CD4-positive, alpha-beta memory T cell (primary cell): ENCODE measurements at regions of chr6 and their contacts with region 1.

Region 1: DNA sequence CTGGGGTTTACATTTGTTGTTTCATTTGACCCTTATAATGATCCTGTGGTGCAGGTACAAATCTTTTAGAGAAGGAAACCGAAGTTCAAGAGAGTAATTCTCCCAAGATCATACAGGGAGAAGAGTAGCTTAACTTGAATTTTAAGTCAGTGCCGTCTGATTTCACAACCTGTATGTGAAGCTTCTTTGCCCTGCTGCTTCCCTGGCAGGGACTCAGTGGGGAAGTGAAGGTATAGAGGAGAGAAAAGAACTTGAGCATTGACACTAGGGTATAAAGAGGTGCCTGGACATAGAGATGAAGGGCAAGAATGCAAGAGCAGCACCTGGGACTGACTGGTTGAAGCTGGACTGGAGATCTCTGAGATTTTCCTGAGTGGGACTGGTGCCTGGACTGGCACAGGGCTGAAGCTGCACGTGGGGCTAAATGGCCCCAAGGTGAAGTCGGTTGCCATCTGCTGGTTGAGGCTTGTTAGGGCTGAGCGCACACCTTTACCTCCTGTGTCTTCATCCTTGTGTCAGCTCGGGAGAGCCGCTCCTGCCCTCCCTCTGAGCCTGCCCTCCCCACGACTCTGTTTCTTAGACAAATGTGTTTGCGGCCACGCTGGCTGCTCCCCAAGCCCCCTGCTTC is 41.8 kb downstream of the FARS2 start:
- DNase-seq: peak; percentile 56 to 66 (median 62)
- H3K4me3 ChIP-seq: no peak overlapping the region
- H3K4me3 Mint-ChIP-seq: peak overlapping the region in 7 of 8 donors; percentile 43 to 78 (median 71)
- H3K27ac ChIP-seq: no peak overlapping the region
- H3K27ac Mint-ChIP-seq: peak overlapping the region in 6 of 7 donors; percentile 1 to 67 (median 63)
- H3K4me1 ChIP-seq: peaks cover 26% of the 10 kb centered on the region
- H3K4me1 Mint-ChIP-seq: peaks cover 25 to 46% (median 38%) of the 10 kb centered on the region in 4 donors
- H3K27me3 ChIP-seq: no peaks in the 10 kb centered on the region
- H3K27me3 Mint-ChIP-seq: no peaks in the 10 kb centered on the region

Region 2: GRCh38 chr6:5135788-5136376 is 167.2 kb before region 1 on chr6:
- CTCF ChIA-PET with region 1: interaction called, 259 read pairs
- POLR2A ChIA-PET with region 1: no interaction called
- intact Hi-C with region 1: loop called (anchors 2 kb)
- DNase-seq: peak in 4 of 5 donors; percentile 12 to 35 (median 29)
- H3K4me3 ChIP-seq: no peak overlapping the region
- H3K4me3 Mint-ChIP-seq: no peak overlapping the region
- H3K27ac ChIP-seq: no peak overlapping the region
- H3K27ac Mint-ChIP-seq: peak overlapping the region in 1 of 7 donors; percentile 6
- H3K4me1 ChIP-seq: no peaks in the 10 kb centered on the region
- H3K4me1 Mint-ChIP-seq: peaks cover 0 to 7% (median 3%) of the 10 kb centered on the region in 4 donors
- H3K27me3 ChIP-seq: no peaks in the 10 kb centered on the region
- H3K27me3 Mint-ChIP-seq: no peaks in the 10 kb centered on the region

Region 3: GRCh38 chr6:5174244-5174643 is 128.9 kb before region 1 on chr6:
- CTCF ChIA-PET with region 1: interaction called, 14 read pairs
- POLR2A ChIA-PET with region 1: no interaction called
- intact Hi-C with region 1: no loop called
- DNase-seq: peak; percentile 62 to 74 (median 72)
- H3K4me3 ChIP-seq: peak overlapping the region in 1 of 2 donors; percentile 4
- H3K4me3 Mint-ChIP-seq: peak overlapping the region; percentile 61 to 78 (median 70)
- H3K27ac ChIP-seq: peak overlapping the region; percentile 50
- H3K27ac Mint-ChIP-seq: peak overlapping the region; percentile 60 to 90 (median 82)
- H3K4me1 ChIP-seq: peaks cover 33% of the 10 kb centered on the region
- H3K4me1 Mint-ChIP-seq: peaks cover 30 to 43% (median 37%) of the 10 kb centered on the region in 4 donors
- H3K27me3 ChIP-seq: no peaks in the 10 kb centered on the region
- H3K27me3 Mint-ChIP-seq: no peaks in the 10 kb centered on the region

Region 4: DNA sequence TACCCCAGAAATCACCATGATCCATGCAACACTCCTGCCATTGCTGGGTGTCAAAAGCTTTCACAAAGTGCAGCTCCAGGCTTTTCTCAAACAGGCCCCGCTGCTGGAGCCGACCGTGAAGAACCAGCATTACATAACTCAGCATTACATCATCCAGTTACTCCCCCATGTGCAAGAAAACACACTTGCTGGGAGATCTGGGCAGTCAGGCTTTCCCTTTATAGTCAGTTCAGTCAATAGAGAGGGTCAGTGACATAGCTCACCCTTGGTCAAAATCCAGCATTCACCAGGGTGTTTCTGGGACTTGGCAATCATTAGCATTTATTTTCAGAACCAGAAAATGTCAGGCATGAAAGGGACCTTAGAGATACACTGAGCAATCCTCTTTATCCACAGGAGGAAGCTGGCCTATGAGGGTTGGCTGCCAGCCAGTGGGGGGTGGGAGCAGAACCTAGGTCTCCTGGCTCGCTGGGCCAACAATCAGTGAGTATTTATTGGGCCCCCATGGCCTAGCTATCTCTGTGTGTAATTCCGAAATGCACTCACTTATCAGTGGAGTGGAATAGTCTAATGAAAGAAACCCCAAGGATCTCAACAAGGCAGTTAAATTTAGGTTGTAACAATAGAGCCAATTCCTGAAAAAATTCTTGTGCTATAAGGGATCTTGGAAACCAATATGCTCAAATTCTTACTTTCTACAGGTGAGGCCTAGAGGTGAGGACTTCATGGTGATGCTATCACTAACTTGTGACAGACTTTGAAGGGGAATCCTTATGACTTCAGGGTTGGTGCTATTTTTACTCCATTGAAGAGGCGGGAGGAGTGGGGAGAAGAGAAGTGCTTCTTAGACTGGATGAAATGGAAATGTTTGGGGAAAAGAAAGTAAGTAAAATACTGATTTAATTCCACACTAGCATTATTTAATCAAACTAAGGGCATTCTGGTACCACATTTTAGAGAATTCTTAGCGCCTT is 96.9 kb before region 1 on chr6:
- CTCF ChIA-PET with region 1: no interaction called
- POLR2A ChIA-PET with region 1: no interaction called
- intact Hi-C with region 1: no loop called
- DNase-seq: no peak
- H3K4me3 ChIP-seq: no peak overlapping the region
- H3K4me3 Mint-ChIP-seq: no peak overlapping the region
- H3K27ac ChIP-seq: no peak overlapping the region
- H3K27ac Mint-ChIP-seq: no peak overlapping the region
- H3K4me1 ChIP-seq: no peaks in the 10 kb centered on the region
- H3K4me1 Mint-ChIP-seq: no peaks in the 10 kb centered on the region
- H3K27me3 ChIP-seq: no peaks in the 10 kb centered on the region
- H3K27me3 Mint-ChIP-seq: no peaks in the 10 kb centered on the region

Region 5: GRCh38 chr6:5220443-5220842 is 82.7 kb before region 1 on chr6:
- CTCF ChIA-PET with region 1: no interaction called
- POLR2A ChIA-PET with region 1: no interaction called
- intact Hi-C with region 1: no loop called
- DNase-seq: no peak
- H3K4me3 ChIP-seq: no peak overlapping the region
- H3K4me3 Mint-ChIP-seq: no peak overlapping the region
- H3K27ac ChIP-seq: no peak overlapping the region
- H3K27ac Mint-ChIP-seq: no peak overlapping the region
- H3K4me1 ChIP-seq: no peaks in the 10 kb centered on the region
- H3K4me1 Mint-ChIP-seq: peaks cover 0 to 1% (median 0%) of the 10 kb centered on the region in 4 donors
- H3K27me3 ChIP-seq: no peaks in the 10 kb centered on the region
- H3K27me3 Mint-ChIP-seq: no peaks in the 10 kb centered on the region

Region 6: DNA sequence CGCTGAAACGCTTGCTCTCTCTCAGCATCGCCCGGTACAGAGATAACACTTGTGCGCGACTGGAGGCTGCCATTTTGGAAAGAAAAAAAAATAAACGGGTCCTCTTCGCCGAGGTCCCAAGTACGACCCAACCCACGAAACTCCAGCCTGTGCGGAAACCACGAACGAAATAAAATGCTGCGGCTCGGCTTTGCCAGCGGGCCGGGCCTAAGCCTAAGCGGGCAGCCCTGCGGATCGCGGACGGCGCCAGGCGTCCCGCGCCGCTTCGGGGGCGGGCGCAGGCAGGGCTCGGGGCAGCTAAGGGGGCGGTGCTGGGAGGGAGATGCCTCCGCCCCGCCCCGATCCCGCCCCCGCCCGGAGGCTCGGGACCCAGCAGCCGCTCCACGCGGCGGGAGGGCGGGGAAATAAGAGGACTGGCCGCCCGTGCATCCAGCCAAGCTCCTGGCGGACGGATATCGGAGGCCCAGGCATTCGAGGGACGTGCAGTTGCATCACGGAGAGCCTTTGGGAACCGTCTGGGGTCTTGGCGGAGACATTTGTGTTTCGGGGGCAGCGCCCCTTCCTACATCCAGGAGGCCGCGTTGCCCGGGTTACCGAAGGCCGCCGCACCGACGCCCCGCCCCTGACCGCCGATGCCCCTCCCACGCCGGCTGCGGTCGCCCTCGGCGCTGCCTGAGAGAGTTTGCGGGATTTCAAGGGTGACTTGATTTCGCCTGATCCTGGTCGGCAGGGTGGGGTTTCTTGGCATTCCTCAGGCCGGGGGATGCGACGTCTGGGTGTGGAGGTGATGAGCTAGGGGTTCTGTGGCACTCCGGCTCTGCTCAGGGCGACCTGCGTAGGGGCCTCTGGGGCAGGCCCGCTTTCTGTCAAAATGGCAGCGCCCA is 42.2 kb before region 1 on chr6 and contains the starts of genes FARS2 and LYRM4:
- CTCF ChIA-PET with region 1: interaction called, 10 read pairs
- POLR2A ChIA-PET with region 1: no interaction called
- intact Hi-C with region 1: loop called (anchors 1 kb)
- DNase-seq: peak; percentile 90 to 99 (median 96)
- H3K4me3 ChIP-seq: peak within 1 kb of the TSS; percentile 95 to 96
- H3K4me3 Mint-ChIP-seq: peak within 1 kb of the TSS; percentile 96 to 99 (median 99)
- H3K27ac ChIP-seq: peak within 1 kb of the TSS; percentile 95
- H3K27ac Mint-ChIP-seq: peak within 1 kb of the TSS; percentile 99 to 100 (median 100)
- H3K4me1 ChIP-seq: peaks cover 21% of the 10 kb centered on the region
- H3K4me1 Mint-ChIP-seq: peaks cover 18 to 40% (median 27%) of the 10 kb centered on the region in 4 donors
- H3K27me3 ChIP-seq: no peaks in the 10 kb centered on the region
- H3K27me3 Mint-ChIP-seq: no peaks in the 10 kb centered on the region
- total RNA-seq, gene FARS2: 15.6 to 19.2 TPM
- total RNA-seq, gene LYRM4: 10.6 to 14.3 TPM

Region 7: GRCh38 chr6:5292154-5292553 is 11.0 kb before region 1 on chr6:
- CTCF ChIA-PET with region 1: interaction called, 11 read pairs
- POLR2A ChIA-PET with region 1: no interaction called
- intact Hi-C with region 1: no loop called
- DNase-seq: no peak
- H3K4me3 ChIP-seq: no peak overlapping the region
- H3K4me3 Mint-ChIP-seq: no peak overlapping the region
- H3K27ac ChIP-seq: no peak overlapping the region
- H3K27ac Mint-ChIP-seq: peak overlapping the region in 1 of 7 donors; percentile 5
- H3K4me1 ChIP-seq: peaks cover 16% of the 10 kb centered on the region
- H3K4me1 Mint-ChIP-seq: peaks cover 27 to 54% (median 38%) of the 10 kb centered on the region in 4 donors
- H3K27me3 ChIP-seq: no peaks in the 10 kb centered on the region
- H3K27me3 Mint-ChIP-seq: no peaks in the 10 kb centered on the region

Region 8: GRCh38 chr6:5315881-5316280 is 12.8 kb after region 1 on chr6:
- CTCF ChIA-PET with region 1: interaction called, 11 read pairs
- POLR2A ChIA-PET with region 1: no interaction called
- intact Hi-C with region 1: no loop called
- DNase-seq: no peak
- H3K4me3 ChIP-seq: no peak overlapping the region
- H3K4me3 Mint-ChIP-seq: no peak overlapping the region
- H3K27ac ChIP-seq: no peak overlapping the region
- H3K27ac Mint-ChIP-seq: no peak overlapping the region
- H3K4me1 ChIP-seq: no peaks in the 10 kb centered on the region
- H3K4me1 Mint-ChIP-seq: peaks cover 12 to 22% (median 15%) of the 10 kb centered on the region in 4 donors
- H3K27me3 ChIP-seq: no peaks in the 10 kb centered on the region
- H3K27me3 Mint-ChIP-seq: no peaks in the 10 kb centered on the region

Region 9: GRCh38 chr6:5471044-5471443 is 167.9 kb after region 1 on chr6:
- CTCF ChIA-PET with region 1: no interaction called
- POLR2A ChIA-PET with region 1: no interaction called
- intact Hi-C with region 1: no loop called
- DNase-seq: peak in 4 of 5 donors; percentile 36 to 59 (median 44)
- H3K4me3 ChIP-seq: no peak overlapping the region
- H3K4me3 Mint-ChIP-seq: no peak overlapping the region
- H3K27ac ChIP-seq: no peak overlapping the region
- H3K27ac Mint-ChIP-seq: no peak overlapping the region
- H3K4me1 ChIP-seq: no peaks in the 10 kb centered on the region
- H3K4me1 Mint-ChIP-seq: peaks cover 0 to 7% (median 3%) of the 10 kb centered on the region in 4 donors
- H3K27me3 ChIP-seq: no peaks in the 10 kb centered on the region
- H3K27me3 Mint-ChIP-seq: no peaks in the 10 kb centered on the region

Region 10: GRCh38 chr6:6547110-6547879 is 1244.2 kb after region 1 on chr6:
- CTCF ChIA-PET with region 1: interaction called, 3 read pairs
- POLR2A ChIA-PET with region 1: no interaction called
- intact Hi-C with region 1: loop called (anchors 1 kb)
- DNase-seq: peak; percentile 65 to 77 (median 73)
- H3K4me3 ChIP-seq: peak overlapping the region; percentile 17 to 35
- H3K4me3 Mint-ChIP-seq: peak overlapping the region; percentile 55 to 84 (median 77)
- H3K27ac ChIP-seq: no peak overlapping the region
- H3K27ac Mint-ChIP-seq: peak overlapping the region in 2 of 7 donors; percentile 44 to 48
- H3K4me1 ChIP-seq: peaks cover 12% of the 10 kb centered on the region
- H3K4me1 Mint-ChIP-seq: peaks cover 3 to 12% (median 4%) of the 10 kb centered on the region in 4 donors
- H3K27me3 ChIP-seq: peaks cover 9% of the 10 kb centered on the region
- H3K27me3 Mint-ChIP-seq: peaks cover 27 to 38% of the 10 kb centered on the region in 2 donors